HCT116 (cell line): ENCODE measurements at regions of chr12 and their contacts with region 1.

Region 1: GRCh38 chr12:40907115-40907521 is 214.9 kb downstream of the CNTN1 start:
- DNase-seq: peak; percentile 85
- ATAC-seq: peak; percentile 96
- H3K4me3 ChIP-seq: 0 out of 4 replicates have a peak overlapping the region, but pooled peaks of 1 of the 2 experiments have one; percentile 10
- H3K27ac ChIP-seq: peak overlapping the region; percentile 45; the same call in 1 of the 2 replicates
- H3K4me1 ChIP-seq: peaks cover 0 to 26% of the 10 kb centered on the region in 2 experiments; a peak in 3 of 4 replicates
- H3K27me3 ChIP-seq: no peaks in the 10 kb centered on the region
- CTCF ChIP-seq: no peak
- POLR2A ChIP-seq: no peak
- RAD21 ChIP-seq: no peak

Region 2: DNA sequence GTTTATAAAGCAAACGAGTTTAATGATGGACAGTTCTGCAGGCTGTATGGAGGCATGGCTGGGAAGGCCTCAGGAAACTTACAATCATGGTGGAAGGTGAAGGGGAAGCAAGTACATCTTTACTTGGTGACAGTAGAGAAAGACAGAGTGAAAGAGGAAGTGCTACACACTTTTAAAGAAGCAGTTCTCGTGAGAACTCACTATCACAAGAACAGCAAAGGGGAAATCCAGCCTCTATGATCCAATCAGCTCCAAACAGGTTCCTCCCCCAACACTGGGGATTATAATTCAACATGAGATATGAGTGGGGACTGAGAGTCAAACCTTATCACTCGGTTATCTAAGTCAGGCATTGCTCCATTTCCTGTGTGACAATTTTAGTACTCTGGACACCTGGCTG is 404.8 kb before region 1 on chr12:
- CTCF ChIA-PET with region 1: no interaction called
- POLR2A ChIA-PET with region 1: no interaction called
- RAD21 ChIA-PET with region 1: interaction called in 1 of 2 experiments, 12 read pairs
- intact Hi-C with region 1: no loop called
- DNase-seq: no peak
- ATAC-seq: no peak
- H3K4me3 ChIP-seq: no peak overlapping the region
- H3K27ac ChIP-seq: no peak overlapping the region
- H3K4me1 ChIP-seq: no peaks in the 10 kb centered on the region
- H3K27me3 ChIP-seq: no peaks in the 10 kb centered on the region
- CTCF ChIP-seq: no peak
- POLR2A ChIP-seq: no peak
- RAD21 ChIP-seq: no peak

Region 3: DNA sequence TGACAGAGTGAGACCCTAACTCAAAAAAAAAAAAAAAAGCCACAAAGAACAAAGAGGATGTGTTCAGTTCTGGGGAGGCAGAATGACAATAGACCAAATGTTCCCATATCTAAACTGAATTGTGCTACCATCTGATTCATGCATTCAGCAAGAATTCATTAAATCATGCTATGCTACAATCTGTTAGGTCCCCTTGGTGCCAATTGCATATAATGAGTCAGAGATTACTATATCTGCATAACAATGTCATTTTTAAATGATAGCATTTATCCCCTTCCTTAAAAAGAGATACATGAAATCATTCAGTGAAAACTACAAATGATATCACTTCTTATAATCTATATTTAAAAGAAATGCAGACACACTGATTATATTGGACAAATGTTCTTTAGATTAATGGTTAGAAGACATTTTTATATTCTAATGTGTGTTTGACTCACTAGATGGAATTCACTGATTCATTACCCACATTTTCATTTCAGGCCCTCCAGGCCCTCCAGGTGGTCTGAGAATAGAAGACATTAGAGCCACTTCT is 73.4 kb after region 1 on chr12:
- CTCF ChIA-PET with region 1: no interaction called
- POLR2A ChIA-PET with region 1: no interaction called
- RAD21 ChIA-PET with region 1: no interaction called
- intact Hi-C with region 1: no loop called
- DNase-seq: peak; percentile 12
- ATAC-seq: no peak
- H3K4me3 ChIP-seq: no peak overlapping the region
- H3K27ac ChIP-seq: no peak overlapping the region
- H3K4me1 ChIP-seq: no peaks in the 10 kb centered on the region
- H3K27me3 ChIP-seq: no peaks in the 10 kb centered on the region
- CTCF ChIP-seq: no peak
- POLR2A ChIP-seq: no peak
- RAD21 ChIP-seq: no peak

Region 4: DNA sequence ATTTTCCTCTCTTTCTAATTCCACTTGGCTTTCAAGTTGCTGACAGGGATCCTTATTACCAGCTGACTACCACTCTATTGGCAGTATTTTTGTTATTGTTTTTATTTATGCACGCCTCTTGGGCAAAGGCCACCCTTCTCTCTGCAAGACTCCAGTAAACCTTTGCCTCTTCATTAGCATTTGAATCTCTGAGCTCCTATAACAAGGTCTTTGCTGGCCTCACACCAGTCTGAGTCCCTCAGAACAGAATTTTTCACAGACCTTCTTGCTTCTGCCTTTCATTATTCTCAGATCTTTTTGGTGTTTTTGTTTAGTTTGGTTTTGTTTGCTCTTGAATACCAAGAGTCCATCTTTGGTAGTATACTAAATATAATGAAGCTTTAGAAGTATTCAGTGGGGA is 426.9 kb after region 1 on chr12:
- CTCF ChIA-PET with region 1: no interaction called
- POLR2A ChIA-PET with region 1: no interaction called
- RAD21 ChIA-PET with region 1: no interaction called
- intact Hi-C with region 1: no loop called
- DNase-seq: no peak
- ATAC-seq: no peak
- H3K4me3 ChIP-seq: no peak overlapping the region
- H3K27ac ChIP-seq: no peak overlapping the region
- H3K4me1 ChIP-seq: no peaks in the 10 kb centered on the region
- H3K27me3 ChIP-seq: no peaks in the 10 kb centered on the region
- CTCF ChIP-seq: no peak
- POLR2A ChIP-seq: no peak
- RAD21 ChIP-seq: no peak